Left cardiac atrium (tissue), 4 donors: ENCODE measurements at regions of chr7 and their contacts with region 1.

Region 1: DNA sequence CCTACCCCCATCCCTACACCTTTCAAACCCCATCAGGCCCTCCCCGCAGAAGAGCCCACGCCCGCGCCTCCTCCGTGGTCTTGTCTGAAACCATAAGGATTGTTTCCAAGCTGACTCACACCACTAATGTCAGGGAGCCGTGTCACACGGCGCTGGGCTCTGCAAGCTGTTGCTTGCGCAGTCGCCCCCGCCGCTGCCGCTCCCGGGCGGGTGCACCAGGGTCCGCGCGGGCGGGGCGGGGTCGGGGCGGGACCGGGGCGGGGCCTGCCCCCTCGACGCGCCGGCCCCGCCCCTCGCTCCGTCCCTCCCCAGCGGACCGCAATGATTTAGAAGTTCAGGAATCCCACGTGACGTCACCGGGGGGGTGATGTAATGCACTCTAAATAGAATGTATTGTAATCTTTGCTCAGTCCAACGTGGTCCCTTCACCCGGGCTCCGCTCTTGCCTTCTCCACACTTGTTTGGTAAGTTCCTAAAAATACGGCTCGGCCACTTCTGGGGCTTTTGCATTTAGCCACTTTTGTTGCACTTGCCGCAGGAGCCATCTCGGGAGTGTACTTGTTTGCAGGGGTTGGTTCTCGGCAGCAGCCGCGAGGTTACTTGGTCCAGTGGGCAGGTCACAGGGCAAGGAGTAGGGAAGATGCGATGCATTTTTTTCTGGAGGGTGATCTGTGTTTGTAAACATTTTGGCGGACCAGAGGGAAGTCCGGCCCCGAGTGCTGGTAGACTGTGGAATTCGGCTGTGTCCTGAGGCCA is 3.2 kb upstream of the CREB5 start:
- DNase-seq: peak; percentile 97
- ATAC-seq: peak; percentile 89

Region 2: DNA sequence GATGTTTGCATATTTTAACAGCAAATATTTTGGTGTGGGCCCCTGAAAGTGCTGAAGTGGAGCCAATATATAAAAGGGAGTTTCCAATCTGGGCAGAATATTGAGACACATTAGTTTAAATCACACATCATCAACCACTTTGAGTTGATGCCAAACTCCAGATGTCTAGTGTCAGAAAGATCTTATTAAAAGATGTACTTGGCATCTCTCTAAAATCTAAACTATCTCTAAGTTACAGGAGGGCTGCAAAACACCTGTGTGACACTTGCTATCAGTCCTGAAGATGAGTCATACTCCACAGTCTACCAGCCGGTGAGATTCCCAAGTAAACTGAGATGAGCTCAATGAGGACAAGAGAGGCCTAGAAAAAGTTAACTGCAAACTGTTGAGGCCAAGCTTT is 239.9 kb before region 1 on chr7:
- intact Hi-C with region 1: no loop called
- DNase-seq: no peak
- ATAC-seq: peak in 1 of 2 donors; percentile 39

Region 3: DNA sequence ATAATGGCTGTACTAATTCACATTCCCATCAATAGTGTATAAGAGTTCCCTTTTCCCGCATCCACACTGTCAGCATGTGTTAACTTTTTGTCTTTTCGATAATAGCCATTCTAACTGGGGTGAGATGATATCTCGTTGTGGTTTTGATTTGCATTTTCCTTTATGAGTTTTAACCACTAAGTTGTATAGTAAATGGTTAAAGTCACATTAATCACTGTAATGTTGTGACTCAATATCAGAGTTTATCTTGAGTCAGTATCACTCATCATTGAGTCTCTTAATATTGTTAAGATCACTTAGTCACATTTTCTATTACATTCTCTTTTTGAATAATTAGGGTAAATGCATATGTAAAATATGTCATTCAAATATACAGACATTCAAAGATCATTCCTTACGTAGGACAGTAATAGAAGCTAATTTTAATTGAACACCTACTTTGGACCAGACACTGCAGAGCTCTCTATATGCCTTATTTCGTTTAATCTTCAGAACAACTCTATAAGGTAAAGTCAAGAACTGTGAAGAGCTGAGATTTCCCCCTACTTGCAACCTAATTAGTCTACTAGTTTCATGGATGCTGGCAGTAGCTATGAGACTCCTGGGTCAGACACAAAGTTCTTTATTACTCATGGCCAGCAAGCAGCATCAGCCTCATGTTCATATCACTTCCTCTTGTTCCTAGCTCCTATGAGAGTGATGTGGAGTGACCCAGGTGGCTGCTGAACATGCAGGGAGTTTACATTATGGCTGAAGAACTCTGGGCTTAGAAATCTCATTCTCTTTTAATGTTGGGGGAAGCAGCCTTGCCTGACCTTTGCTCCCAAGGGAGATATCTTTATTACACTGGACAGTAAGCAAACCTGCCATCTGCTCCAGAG is 33.6 kb after region 1 on chr7:
- intact Hi-C with region 1: no loop called
- DNase-seq: no peak
- ATAC-seq: no peak

Region 4: GRCh38 chr7:28536259-28536658 is 127.1 kb after region 1 on chr7:
- intact Hi-C with region 1: loop called in 1 of 2 experiments (anchors 10 kb)
- DNase-seq: no peak
- ATAC-seq: peak; percentile 34 to 80

Region 5: GRCh38 chr7:28685644-28686417 is 276.7 kb after region 1 on chr7:
- intact Hi-C with region 1: loop called in 1 of 2 experiments (anchors 10 kb)
- DNase-seq: peak; percentile 92
- ATAC-seq: peak; percentile 95 to 96